ENCODE measurements at regions of chr12 and their contacts with region 1.

Region 1: GRCh38 chr12:48157018-48157888 is at the start of gene ASB8:
- DNase-seq: peak; percentile 98
- ATAC-seq: peak; percentile 99
- H3K4me3 ChIP-seq: peak within 1 kb of the TSS; percentile 98
- H3K27ac ChIP-seq: peak within 1 kb of the TSS; percentile 94
- H3K4me1 ChIP-seq: peaks cover 10% of the 10 kb centered on the region; the same call in 1 of the 2 replicates
- H3K27me3 ChIP-seq: no peaks in the 10 kb centered on the region
- CTCF ChIP-seq: peak; percentile 70
- total RNA-seq, gene ASB8: 17.1 TPM

Region 2: GRCh38 chr12:47705566-47706425 is 451.5 kb before region 1 on chr12 and contains the start of gene RPAP3:
- CTCF ChIA-PET with region 1: interaction called, 10 read pairs
- POLR2A ChIA-PET with region 1: no interaction called
- in situ Hi-C with region 1: no loop called
- intact Hi-C with region 1: no loop called
- DNase-seq: peak; percentile 59
- ATAC-seq: peak; percentile 99
- H3K4me3 ChIP-seq: peak within 1 kb of the TSS; percentile 57 to 87
- H3K27ac ChIP-seq: peak within 1 kb of the TSS; percentile 99
- H3K4me1 ChIP-seq: peaks cover 16% of the 10 kb centered on the region
- H3K27me3 ChIP-seq: no peaks in the 10 kb centered on the region
- CTCF ChIP-seq: peak; percentile 86
- total RNA-seq, gene RPAP3: 47.3 TPM

Measured in Panc1 (cell line).